ENCODE measurements at regions of chr19 and their contacts with region 1.

Region 1: GRCh38 chr19:45768984-45769782 is at the start of gene SIX5:
- DNase-seq: peak; percentile 98 to 99
- ATAC-seq: peak; percentile 64
- total RNA-seq, gene SIX5: 9.2 to 12.6 TPM

Region 2: GRCh38 chr19:45677351-45678230 is 91.6 kb before region 1 on chr19:
- intact Hi-C with region 1: no loop called
- DNase-seq: peak; percentile 97 to 98
- ATAC-seq: peak; percentile 78

Region 3: GRCh38 chr19:45717166-45717982 is 51.8 kb before region 1 on chr19:
- intact Hi-C with region 1: loop called in 1 of 2 experiments (anchors 10 kb)
- DNase-seq: peak; percentile 98 to 99
- ATAC-seq: peak; percentile 84

Measured in left colon (tissue), 2 donors.